GM23248 (cell line): ENCODE measurements at regions of chrX and their contacts with region 1.

Region 1: GRCh38 chrX:41734530-41734929 is 10.5 kb downstream of the GPR82 start:
- DNase-seq: peak; percentile 36
- H3K4me3 ChIP-seq: no peak overlapping the region
- H3K27ac ChIP-seq: no peak overlapping the region
- H3K4me1 ChIP-seq: no peaks in the 10 kb centered on the region
- H3K27me3 ChIP-seq: no peaks in the 10 kb centered on the region

Region 2: DNA sequence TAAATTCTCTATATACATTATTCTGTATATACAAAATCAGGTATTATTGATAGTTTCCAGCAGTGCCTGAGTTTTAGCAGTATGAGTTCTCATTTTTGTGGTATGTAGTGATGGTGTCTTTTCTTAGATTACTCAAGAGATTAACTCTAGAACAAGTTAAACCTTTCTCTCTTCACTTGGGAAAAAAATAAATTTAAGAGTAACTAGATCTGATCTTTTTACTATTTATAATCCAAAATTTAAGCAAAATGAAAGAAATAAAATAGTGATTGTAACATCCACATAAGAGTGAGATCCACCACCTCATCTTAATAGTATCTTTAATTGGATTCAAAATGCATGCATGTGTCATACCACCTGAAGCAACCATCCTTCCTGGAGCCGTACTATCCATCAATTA is 524.7 kb before region 1 on chrX:
- in situ Hi-C with region 1: no loop called
- DNase-seq: no peak
- H3K4me3 ChIP-seq: no peak overlapping the region
- H3K27ac ChIP-seq: no peak overlapping the region
- H3K4me1 ChIP-seq: no peaks in the 10 kb centered on the region
- H3K27me3 ChIP-seq: no peaks in the 10 kb centered on the region

Region 3: GRCh38 chrX:41275661-41276609 is 458.6 kb before region 1 on chrX:
- in situ Hi-C with region 1: loop called (anchors 25 kb)
- DNase-seq: peak; percentile 68
- H3K4me3 ChIP-seq: peak overlapping the region; percentile 71
- H3K27ac ChIP-seq: no peak overlapping the region
- H3K4me1 ChIP-seq: no peaks in the 10 kb centered on the region; the same call in 1 of the 2 replicates
- H3K27me3 ChIP-seq: no peaks in the 10 kb centered on the region

Region 4: DNA sequence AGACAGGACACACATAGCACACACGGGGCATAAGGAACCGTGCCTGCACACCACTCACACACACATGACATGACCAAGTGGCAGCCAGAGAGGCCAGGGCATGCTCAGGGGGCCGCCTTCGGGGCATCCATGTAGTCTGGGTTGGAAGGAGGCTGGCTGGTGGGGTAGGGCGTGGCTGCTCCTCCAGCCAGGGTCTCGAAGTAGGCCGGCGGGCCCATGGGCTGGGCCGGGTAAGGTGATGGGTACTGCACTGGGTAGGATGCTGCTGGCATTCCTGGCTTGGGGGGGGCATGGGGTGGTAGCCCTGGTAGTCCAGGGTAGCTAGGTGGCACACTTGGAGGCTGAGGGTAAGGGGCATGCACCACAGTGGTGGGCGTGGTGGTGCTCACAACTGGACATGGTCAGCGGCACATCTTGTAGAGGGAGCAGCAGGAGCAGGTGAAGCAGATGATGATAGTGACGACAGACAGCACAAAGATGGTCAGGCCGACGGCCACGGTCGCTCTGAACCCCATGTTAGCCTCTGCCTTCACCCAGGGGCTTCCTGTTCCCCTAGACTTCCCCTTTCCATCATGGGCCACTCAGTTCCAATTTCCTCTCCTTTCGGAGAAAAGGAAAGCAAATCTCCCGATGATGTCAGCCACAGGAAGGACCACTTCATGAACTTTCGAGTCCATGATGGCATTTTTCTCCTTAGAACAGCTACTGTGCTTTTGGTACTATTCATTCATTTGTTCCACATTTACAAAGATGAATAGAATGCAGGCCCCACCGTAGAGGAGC is 411.5 kb before region 1 on chrX:
- in situ Hi-C with region 1: no loop called
- DNase-seq: no peak
- H3K4me3 ChIP-seq: no peak overlapping the region
- H3K27ac ChIP-seq: no peak overlapping the region
- H3K4me1 ChIP-seq: no peaks in the 10 kb centered on the region
- H3K27me3 ChIP-seq: no peaks in the 10 kb centered on the region

Region 5: GRCh38 chrX:41412261-41413081 is 322.1 kb before region 1 on chrX:
- in situ Hi-C with region 1: no loop called
- DNase-seq: no peak
- H3K4me3 ChIP-seq: no peak overlapping the region
- H3K27ac ChIP-seq: no peak overlapping the region
- H3K4me1 ChIP-seq: no peaks in the 10 kb centered on the region
- H3K27me3 ChIP-seq: no peaks in the 10 kb centered on the region

Region 6: DNA sequence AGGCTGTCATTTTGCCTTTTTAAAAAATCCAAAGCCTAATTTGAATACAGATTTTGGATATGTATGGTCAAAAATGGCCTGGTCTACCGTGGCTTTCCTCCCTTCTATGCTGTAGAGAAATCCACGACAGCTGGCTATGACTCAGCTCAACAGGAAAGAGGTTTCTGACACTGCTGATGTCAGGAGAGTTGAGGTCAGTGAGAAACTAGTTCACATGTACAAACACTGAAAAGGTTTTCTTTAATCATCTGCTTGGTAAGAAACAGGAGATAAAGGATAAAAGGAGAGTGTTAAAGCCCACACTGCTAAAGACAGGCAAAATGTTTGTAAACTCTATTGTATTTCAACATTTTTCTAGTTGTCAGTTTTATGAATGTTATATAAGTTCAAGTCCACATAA is 173.5 kb before region 1 on chrX:
- in situ Hi-C with region 1: loop called (anchors 25 kb)
- DNase-seq: peak; percentile 85
- H3K4me3 ChIP-seq: no peak overlapping the region
- H3K27ac ChIP-seq: peak overlapping the region; percentile 78
- H3K4me1 ChIP-seq: peaks cover 27% of the 10 kb centered on the region
- H3K27me3 ChIP-seq: no peaks in the 10 kb centered on the region

Region 7: DNA sequence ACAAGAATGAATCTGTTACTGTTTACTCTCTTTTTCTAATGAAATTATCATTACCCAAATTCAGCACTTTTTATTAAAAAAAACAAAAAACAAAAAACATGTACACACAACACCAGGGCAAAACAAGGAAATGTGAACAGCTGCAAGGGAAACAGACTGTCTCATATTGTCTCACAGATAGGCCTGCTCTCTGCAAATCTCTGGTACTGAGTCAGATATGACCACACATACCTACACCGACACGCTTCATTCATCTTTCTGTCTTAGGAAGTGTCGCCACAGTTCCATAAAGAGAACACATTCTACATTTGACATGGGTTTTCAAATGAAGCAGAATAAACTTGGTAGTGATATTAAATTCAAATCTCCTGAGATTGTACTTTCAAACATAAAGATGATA is 137.9 kb before region 1 on chrX:
- in situ Hi-C with region 1: no loop called
- DNase-seq: peak; percentile 10
- H3K4me3 ChIP-seq: no peak overlapping the region
- H3K27ac ChIP-seq: no peak overlapping the region
- H3K4me1 ChIP-seq: peaks cover 9% of the 10 kb centered on the region
- H3K27me3 ChIP-seq: no peaks in the 10 kb centered on the region